ENCODE measurements at regions of chr4 and their contacts with region 1.

Region 1: DNA sequence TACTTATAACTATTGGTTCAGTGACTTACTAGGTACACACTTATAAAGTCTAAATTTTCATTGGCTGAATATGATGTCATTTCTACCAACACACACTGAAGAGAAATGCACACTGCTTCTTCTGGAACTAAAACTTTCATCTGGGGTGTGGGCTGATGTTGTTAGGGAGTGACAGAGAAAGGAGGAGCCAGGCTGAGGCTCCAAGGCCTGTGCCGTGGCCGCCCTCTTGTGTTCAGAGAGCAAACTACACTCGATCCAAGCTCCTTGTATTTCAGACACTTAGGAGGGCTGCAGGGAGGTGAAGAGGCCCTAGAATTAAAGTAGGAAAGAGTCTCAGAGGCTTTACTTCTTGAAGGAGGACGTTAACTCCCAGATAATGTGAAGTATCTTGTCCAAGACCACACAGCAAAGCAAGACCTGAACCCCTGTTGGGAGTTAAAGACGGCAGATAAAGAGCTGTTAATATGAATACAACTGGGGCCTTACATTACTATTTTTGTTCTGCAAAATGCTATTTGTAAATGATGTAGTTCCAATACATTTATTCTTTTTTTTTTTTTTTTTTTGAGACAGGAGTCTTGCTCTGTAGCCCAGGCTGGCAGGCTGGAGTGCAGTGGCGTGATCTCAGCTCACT is 137.5 kb downstream of the AFAP1 start:
- DNase-seq: peak; percentile 82 to 86
- H3K4me3 ChIP-seq: no peak overlapping the region
- H3K27ac ChIP-seq: no peak overlapping the region
- H3K4me1 ChIP-seq: peaks cover 0 to 45% (median 39%) of the 10 kb centered on the region in 4 donors
- H3K27me3 ChIP-seq: no peaks in the 10 kb centered on the region
- CTCF ChIP-seq: peak; percentile 90 to 91

Region 2: GRCh38 chr4:7761720-7762119 is 40.5 kb before region 1 on chr4:
- intact Hi-C with region 1: loop called (anchors 2 kb)
- DNase-seq: peak; percentile 84 to 89
- H3K4me3 ChIP-seq: no peak overlapping the region
- H3K27ac ChIP-seq: peak overlapping the region in 1 of 2 donors; percentile 1
- H3K4me1 ChIP-seq: peaks cover 0 to 14% (median 2%) of the 10 kb centered on the region in 4 donors
- H3K27me3 ChIP-seq: no peaks in the 10 kb centered on the region
- CTCF ChIP-seq: peak; percentile 77 to 83

Region 3: GRCh38 chr4:7843831-7844593 is 41.8 kb after region 1 on chr4:
- intact Hi-C with region 1: loop called (anchors 2 kb)
- DNase-seq: peak; percentile 70 to 88
- H3K4me3 ChIP-seq: no peak overlapping the region
- H3K27ac ChIP-seq: peak overlapping the region; percentile 70 to 87
- H3K4me1 ChIP-seq: peaks cover 0 to 39% (median 17%) of the 10 kb centered on the region in 4 donors
- H3K27me3 ChIP-seq: no peaks in the 10 kb centered on the region
- CTCF ChIP-seq: peak; percentile 60 to 66

Region 4: DNA sequence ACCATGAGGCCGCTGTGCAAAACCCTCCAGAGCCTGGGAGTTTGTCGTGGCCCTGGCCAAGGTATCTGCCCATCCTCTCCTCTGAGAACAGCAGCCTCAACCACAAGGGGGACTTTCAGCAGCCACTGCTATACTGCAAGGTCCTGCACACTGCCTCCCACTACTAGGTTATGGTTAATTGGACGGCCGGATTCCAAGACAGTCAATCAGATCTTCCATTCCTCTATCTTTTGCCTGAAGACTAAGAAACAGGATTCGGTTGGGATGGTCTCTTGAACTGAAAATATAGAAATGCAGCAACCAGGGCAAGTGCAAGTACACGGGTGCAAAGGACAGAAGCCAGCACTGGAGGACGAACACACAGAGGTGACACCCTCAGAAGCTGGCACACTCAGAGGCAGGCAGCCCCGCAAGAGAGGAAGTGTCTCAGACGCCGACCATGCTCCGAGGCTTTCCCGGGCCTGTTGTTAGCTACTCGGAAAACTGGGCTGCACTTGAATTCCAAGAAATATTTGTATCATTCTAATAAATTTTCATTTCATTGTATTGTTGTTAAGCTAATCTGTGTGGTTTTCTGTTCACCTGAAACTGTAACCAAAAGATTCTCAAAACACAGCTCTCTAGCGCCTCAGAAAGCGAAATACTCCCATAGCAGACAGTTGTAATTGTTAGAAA is 74.1 kb after region 1 on chr4:
- intact Hi-C with region 1: loop called (anchors 10 kb)
- DNase-seq: no peak
- H3K4me3 ChIP-seq: peak overlapping the region; percentile 12 to 27
- H3K27ac ChIP-seq: peak overlapping the region; percentile 23 to 60
- H3K4me1 ChIP-seq: peaks cover 4 to 68% (median 35%) of the 10 kb centered on the region in 4 donors
- H3K27me3 ChIP-seq: no peaks in the 10 kb centered on the region
- CTCF ChIP-seq: peak in 1 of 2 experiments; percentile 19

Region 5: GRCh38 chr4:7939377-7940108 is 137.3 kb after region 1 on chr4 and contains the start of gene AFAP1:
- intact Hi-C with region 1: loop called (anchors 10 kb)
- DNase-seq: peak; percentile 79 to 92
- H3K4me3 ChIP-seq: peak within 1 kb of the TSS; percentile 80 to 100
- H3K27ac ChIP-seq: peak within 1 kb of the TSS; percentile 83 to 95
- H3K4me1 ChIP-seq: peaks cover 0 to 36% (median 20%) of the 10 kb centered on the region in 4 donors
- H3K27me3 ChIP-seq: no peaks in the 10 kb centered on the region
- CTCF ChIP-seq: no peak

Region 6: DNA sequence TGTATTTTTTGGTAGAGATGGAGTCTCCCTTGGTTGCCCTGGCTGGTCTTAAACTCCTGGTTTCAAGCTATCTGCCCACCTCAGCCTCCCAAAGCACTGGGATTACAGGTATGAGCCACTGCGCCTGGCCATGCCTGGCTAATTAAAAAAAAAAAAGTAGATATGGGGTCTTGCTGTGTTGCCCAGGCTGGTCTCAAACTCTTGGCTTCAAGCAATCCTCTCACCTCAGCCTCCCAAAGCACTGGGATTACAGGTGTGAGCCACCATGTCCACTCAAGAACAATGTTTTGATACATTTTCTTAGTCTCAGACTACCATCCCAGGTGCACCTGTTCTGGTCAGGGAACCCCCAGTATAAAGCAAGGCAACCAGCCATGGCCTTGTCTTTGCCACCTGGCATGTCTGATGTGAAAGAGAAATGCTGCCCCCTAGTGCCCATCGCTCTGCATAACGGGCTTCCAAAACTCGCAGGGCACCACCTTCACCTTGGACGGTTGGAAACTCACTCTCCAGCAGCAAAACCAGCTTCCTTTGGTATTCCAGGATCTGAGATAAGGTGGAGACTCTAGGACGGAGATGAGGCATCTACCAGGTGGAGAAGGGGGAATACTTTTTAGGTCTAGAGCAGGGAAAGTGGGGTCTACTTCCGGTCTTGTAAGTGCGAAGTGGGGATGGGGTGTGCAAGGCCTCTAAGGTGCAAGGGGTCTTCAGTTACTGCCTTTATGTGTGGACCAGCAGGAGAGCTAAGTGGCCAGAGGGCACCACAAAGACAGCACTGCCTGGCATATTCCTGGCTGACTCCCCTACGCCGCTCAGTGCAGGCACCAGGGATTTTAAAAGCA is 185.2 kb after region 1 on chr4:
- intact Hi-C with region 1: loop called (anchors 2 kb)
- DNase-seq: peak; percentile 59 to 78
- H3K4me3 ChIP-seq: no peak overlapping the region
- H3K27ac ChIP-seq: no peak overlapping the region
- H3K4me1 ChIP-seq: no peaks in the 10 kb centered on the region
- H3K27me3 ChIP-seq: no peaks in the 10 kb centered on the region
- CTCF ChIP-seq: peak; percentile 79 to 83